MCF 10A (cell line): ENCODE measurements at regions of chr2 and their contacts with region 1.

Region 1: DNA sequence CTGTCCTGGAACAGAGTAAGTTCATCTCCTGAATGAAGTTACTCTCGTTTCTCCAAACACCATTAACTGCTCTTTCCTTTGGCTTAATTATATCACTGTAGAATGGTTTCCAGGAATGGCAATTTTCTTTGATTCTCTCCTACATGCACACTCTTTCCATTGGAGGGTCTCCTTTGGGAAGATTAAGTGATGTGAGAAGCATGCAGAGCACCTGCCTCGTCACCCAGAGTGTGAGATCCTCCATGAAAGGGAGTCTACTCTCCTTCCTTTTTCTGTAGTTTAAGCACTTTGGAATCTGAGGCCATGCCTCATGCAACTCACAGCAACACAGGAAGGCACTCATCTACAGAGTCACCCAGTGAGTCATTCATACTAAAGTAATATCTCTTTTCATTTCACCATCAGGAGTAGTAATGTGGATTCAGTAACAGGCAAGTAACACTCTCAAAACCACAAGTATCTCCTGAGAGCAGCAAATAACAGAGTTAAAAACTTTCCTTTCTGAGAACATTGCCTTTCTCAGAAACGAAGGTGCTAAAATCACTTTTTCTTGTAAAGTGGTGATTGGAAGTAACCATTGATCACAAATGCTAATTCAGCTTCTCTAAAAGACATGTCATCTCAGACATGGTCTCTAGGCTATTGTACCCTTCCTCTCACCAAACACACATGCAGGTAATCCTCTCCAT is 52.8 kb upstream of the IL1RL1 start:
- DNase-seq: peak; percentile 73
- H3K4me3 Mint-ChIP-seq: no peak overlapping the region
- H3K27ac Mint-ChIP-seq: peak overlapping the region; percentile 99
- H3K4me1 Mint-ChIP-seq: peaks cover 13% of the 10 kb centered on the region
- H3K27me3 Mint-ChIP-seq: no peaks in the 10 kb centered on the region
- CTCF ChIP-seq: no peak

Region 2: DNA sequence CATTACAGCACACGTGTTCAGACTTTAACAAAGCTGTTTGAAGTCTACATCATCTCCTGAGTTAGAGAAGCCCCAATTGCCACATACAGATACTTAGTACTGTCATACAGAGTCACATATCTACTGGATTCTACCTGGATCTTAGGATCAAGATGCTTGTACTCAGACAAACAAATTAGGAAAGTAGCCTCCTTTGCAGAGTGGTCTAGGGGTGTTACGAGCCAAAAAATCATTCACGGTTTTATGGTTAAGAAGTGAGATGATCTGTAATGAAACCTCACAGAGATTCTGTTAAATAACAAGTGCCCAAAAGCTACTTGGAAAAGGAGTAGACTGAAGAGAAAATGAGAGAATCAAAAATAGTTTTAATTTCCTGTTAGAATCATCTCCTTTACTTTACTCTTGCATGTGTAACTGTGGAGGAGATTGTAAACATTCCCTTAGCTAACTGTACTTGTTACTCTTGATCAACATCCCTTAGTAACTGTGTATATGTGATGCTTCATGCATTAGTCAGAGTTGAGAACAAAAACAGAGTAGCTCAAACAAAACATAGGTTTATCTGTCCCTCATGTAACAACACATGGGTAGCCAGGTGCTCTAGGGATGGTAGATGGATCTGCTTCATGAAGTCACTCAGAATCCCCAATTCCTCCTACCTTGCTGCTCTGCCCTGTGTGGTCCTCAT is 36.4 kb after region 1 on chr2:
- CTCF ChIA-PET with region 1: no interaction called
- POLR2A ChIA-PET with region 1: no interaction called
- intact Hi-C with region 1: loop called (anchors 5 kb)
- DNase-seq: peak; percentile 46
- H3K4me3 Mint-ChIP-seq: no peak overlapping the region
- H3K27ac Mint-ChIP-seq: no peak overlapping the region
- H3K4me1 Mint-ChIP-seq: peaks cover 5% of the 10 kb centered on the region
- H3K27me3 Mint-ChIP-seq: no peaks in the 10 kb centered on the region
- CTCF ChIP-seq: no peak

Region 3: GRCh38 chr2:102337012-102337411 is 78.5 kb after region 1 on chr2:
- CTCF ChIA-PET with region 1: interaction called, 3 read pairs
- POLR2A ChIA-PET with region 1: no interaction called
- intact Hi-C with region 1: loop called (anchors 1 kb)
- DNase-seq: peak; percentile 68
- H3K4me3 Mint-ChIP-seq: peak overlapping the region; percentile 16
- H3K27ac Mint-ChIP-seq: peak overlapping the region; percentile 71
- H3K4me1 Mint-ChIP-seq: peaks cover 15% of the 10 kb centered on the region
- H3K27me3 Mint-ChIP-seq: no peaks in the 10 kb centered on the region
- CTCF ChIP-seq: no peak

Region 4: GRCh38 chr2:102667072-102667471 is 408.5 kb after region 1 on chr2:
- CTCF ChIA-PET with region 1: no interaction called
- POLR2A ChIA-PET with region 1: no interaction called
- intact Hi-C with region 1: no loop called
- DNase-seq: no peak
- H3K4me3 Mint-ChIP-seq: no peak overlapping the region
- H3K27ac Mint-ChIP-seq: no peak overlapping the region
- H3K4me1 Mint-ChIP-seq: no peaks in the 10 kb centered on the region
- H3K27me3 Mint-ChIP-seq: no peaks in the 10 kb centered on the region
- CTCF ChIP-seq: no peak